WTC11 (cell line): ENCODE measurements at regions of chr14 and their contacts with region 1.

Region 1: DNA sequence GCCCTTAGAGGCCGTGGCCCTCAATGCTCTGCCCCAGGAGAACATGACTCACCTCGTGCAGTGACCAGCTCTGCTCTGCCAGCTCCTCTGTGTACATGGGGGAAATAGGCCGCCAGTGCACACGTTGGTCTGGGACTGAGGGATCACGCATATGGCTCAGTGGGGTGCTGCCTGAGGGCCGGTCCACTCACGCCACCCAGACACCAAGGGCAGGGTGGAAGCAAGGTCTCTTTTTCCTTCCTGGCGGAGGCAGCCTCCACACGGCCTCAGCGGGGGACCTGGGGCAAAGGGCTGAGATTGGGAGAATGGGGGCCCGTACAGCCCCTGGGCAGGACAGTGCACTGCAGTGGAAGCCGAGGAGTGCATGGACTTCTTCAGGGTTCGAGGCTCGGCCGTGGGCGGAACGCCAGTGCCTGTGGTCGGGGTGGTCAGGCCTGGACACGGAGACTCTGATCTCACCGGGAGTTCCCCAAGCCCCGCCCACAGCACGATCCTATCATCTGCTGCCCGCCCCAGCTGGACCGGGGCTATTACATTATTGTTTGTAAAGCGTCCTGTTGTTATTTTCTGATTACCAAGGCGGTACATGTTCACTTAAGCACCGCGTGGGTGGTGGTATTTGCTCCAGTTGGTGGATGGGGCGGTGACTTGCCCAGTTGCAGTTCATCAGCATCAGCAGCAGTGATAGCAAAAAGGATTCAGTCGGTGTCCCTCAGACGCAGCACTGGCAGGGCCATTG is 38.8 kb upstream of the TDRD9 start:
- DNase-seq: no peak
- ATAC-seq: no peak
- H3K4me3 Mint-ChIP-seq: no peak overlapping the region
- H3K27ac Mint-ChIP-seq: no peak overlapping the region
- H3K4me1 Mint-ChIP-seq: peaks cover 10% of the 10 kb centered on the region
- H3K27me3 Mint-ChIP-seq: no peaks in the 10 kb centered on the region
- CTCF ChIP-seq: no peak

Region 2: DNA sequence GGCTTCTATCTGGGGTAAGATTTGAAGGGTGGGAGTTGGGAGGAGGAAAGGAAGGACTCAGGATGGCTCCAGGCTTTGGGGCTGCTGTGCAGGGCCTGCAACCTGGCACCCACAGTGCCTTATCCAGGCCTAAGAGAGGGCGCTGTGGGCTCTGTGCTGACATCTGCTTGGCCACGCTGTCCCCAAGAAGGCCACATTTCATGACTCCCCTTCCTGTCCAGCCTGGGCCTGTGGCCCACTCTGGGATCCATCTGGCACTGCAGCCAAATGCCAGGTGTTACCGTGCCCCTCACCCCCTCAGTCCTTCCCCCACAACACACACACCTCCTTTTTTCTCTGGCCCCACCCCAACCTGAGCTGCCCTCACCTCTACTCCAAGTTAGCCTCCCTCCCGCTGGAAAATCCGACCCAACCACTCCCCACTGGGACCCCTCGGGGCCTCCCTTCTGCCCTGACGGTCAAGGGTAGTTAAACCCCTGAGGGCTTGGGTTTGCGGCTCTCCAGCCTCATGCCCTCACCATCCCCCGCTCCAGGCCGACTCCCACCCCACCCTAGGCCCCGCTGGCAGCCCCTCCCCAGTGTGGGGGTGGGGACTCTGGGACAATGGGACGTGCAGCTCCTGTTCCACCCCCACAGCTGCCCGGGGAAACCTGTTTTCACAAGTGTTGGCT is 34.3 kb before region 1 on chr14:
- CTCF ChIA-PET with region 1: interaction called, 13 read pairs
- POLR2A ChIA-PET with region 1: no interaction called
- DNase-seq: peak; percentile 75
- ATAC-seq: peak; percentile 79
- H3K4me3 Mint-ChIP-seq: peak overlapping the region; percentile 35
- H3K27ac Mint-ChIP-seq: peak overlapping the region; percentile 86; the same call in 1 of the 2 replicates
- H3K4me1 Mint-ChIP-seq: peaks cover 43% of the 10 kb centered on the region
- H3K27me3 Mint-ChIP-seq: no peaks in the 10 kb centered on the region; the same call in 1 of the 2 replicates
- CTCF ChIP-seq: no peak

Region 3: GRCh38 chr14:103910262-103910935 is 20.9 kb after region 1 on chr14:
- CTCF ChIA-PET with region 1: interaction called, 10 read pairs
- POLR2A ChIA-PET with region 1: no interaction called
- DNase-seq: peak; percentile 88
- ATAC-seq: peak; percentile 96
- H3K4me3 Mint-ChIP-seq: peak overlapping the region; percentile 53
- H3K27ac Mint-ChIP-seq: peak overlapping the region; percentile 5
- H3K4me1 Mint-ChIP-seq: peaks cover 14% of the 10 kb centered on the region
- H3K27me3 Mint-ChIP-seq: no peaks in the 10 kb centered on the region
- CTCF ChIP-seq: peak; percentile 44

Region 4: GRCh38 chr14:104563742-104564615 is 674.5 kb after region 1 on chr14:
- CTCF ChIA-PET with region 1: no interaction called
- POLR2A ChIA-PET with region 1: no interaction called
- DNase-seq: peak; percentile 95
- ATAC-seq: peak; percentile 95
- H3K4me3 Mint-ChIP-seq: no peak overlapping the region
- H3K27ac Mint-ChIP-seq: no peak overlapping the region
- H3K4me1 Mint-ChIP-seq: peaks cover 3% of the 10 kb centered on the region; the same call in 1 of the 2 replicates
- H3K27me3 Mint-ChIP-seq: no peaks in the 10 kb centered on the region
- CTCF ChIP-seq: peak; percentile 75